ENCODE measurements at regions of chr1 and their contacts with region 1.

Region 1: DNA sequence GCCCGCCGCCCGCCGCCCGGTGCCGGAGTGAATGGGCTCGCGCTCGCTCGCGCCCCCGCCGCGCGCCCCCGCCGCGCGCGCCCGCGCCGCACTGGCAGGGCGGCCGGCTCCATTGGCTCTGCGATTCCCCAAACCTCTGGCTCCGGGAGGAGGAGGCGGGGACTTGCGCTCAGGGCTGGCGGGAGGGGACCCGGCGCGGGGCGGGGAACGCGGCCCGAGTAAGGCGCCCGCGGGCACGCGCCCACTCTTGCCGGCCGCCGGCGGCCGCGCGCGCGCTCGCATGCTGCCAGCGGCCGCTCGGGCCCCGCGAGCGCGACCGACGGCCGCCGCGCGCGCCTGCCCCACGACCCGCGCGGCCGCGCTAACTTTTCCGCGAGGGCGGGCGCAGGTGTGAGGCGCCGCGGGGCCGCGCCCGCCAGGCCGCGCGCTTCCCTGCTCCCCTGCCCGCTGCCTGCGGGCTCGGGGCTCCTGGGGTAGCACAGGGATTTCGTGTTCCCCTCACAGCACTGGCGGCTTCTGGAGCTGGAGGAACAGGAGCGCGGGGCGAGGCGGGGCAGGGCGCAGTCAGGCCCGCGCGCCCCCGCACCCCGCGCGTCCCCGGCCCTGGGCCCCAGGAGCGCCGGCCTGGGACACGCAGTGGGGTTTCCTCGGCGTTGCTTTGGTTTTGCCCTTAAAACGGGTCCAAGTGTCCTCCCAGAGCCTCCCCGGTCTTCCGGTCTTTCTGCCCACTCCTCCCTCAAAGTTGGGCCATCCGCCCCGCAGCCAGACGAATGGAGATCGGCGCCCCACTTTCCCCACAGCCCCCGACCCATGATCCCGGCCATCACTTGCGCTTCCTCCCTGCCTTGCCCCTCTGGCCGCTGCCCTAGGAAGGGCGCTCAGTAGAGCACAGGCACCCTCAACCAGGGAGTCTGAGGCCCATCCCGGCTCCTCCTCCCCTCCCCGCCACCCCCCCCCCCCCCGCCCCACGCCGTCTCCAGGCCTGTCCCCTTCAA is 101.5 kb downstream of the CASZ1 start:
- DNase-seq: peak; percentile 60 to 93 (median 73)
- ATAC-seq: peak; percentile 64
- H3K4me3 ChIP-seq: peak overlapping the region; percentile 32 to 48
- H3K4me3 Mint-ChIP-seq: peak overlapping the region; percentile 83
- H3K27ac ChIP-seq: no peak overlapping the region
- H3K27ac Mint-ChIP-seq: peak overlapping the region; percentile 88
- H3K4me1 ChIP-seq: peaks cover 17% of the 10 kb centered on the region
- H3K4me1 Mint-ChIP-seq: peaks cover 13% of the 10 kb centered on the region
- H3K27me3 ChIP-seq: no peaks in the 10 kb centered on the region
- H3K27me3 Mint-ChIP-seq: no peaks in the 10 kb centered on the region
- CTCF ChIP-seq: no peak

Region 2: GRCh38 chr1:9234223-9235095 is 1460.5 kb before region 1 on chr1 and contains the start of gene H6PD:
- CTCF ChIA-PET with region 1: no interaction called
- POLR2A ChIA-PET with region 1: no interaction called
- intact Hi-C with region 1: loop called in 1 of 2 experiments (anchors 10 kb)
- DNase-seq: peak; percentile 43 to 89 (median 71)
- ATAC-seq: peak; percentile 76
- H3K4me3 ChIP-seq: peak within 1 kb of the TSS; percentile 71 to 84
- H3K4me3 Mint-ChIP-seq: peak within 1 kb of the TSS; percentile 96
- H3K27ac ChIP-seq: peak within 1 kb of the TSS; percentile 64 to 84
- H3K27ac Mint-ChIP-seq: peak within 1 kb of the TSS; percentile 96
- H3K4me1 ChIP-seq: peaks cover 26% of the 10 kb centered on the region
- H3K4me1 Mint-ChIP-seq: peaks cover 38% of the 10 kb centered on the region
- H3K27me3 ChIP-seq: no peaks in the 10 kb centered on the region
- H3K27me3 Mint-ChIP-seq: no peaks in the 10 kb centered on the region
- CTCF ChIP-seq: peak; percentile 22
- total RNA-seq, gene H6PD: 11.1 to 11.2 TPM

Region 3: DNA sequence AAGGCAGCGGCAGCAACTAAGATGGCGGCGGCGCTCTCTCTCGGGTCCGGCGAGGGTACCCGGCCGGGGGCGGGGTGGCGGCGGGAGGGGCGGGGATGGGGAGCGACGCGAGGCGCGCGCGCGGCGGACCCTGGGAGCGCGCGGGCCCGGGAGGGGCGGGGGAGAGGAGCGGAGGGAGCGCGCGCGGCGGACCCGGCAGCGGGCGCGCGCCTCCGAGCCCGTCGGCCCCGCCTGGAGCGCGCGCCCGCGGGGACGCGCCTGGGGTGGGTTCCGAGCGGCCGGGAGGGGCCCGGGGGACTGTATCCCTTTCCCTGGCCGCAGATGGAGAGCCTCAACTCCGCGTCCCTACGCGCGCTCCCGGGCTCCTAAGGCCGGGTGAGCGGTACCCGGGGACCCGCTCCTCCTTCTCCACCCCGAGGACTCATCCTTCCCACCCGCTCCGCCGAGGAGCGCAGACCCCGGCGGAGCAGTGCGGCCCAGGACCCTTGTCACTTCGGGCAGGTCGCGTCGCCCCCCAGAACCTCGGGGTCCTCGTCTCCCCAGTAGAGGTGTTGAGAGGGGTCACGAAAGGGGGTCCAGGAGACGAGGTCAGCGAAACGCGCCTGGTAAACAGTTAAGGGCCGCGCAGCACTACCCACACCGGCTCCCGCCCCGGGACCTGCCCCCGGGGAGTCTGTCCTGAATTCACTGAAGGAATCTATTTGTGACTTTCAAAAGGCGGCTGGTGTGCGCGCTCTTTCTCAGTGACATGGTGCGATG is 870.8 kb before region 1 on chr1 and contains the start of gene CLSTN1:
- CTCF ChIA-PET with region 1: no interaction called
- POLR2A ChIA-PET with region 1: no interaction called
- intact Hi-C with region 1: loop called in 1 of 2 experiments (anchors 5 kb)
- DNase-seq: peak; percentile 76 to 93 (median 91)
- ATAC-seq: peak; percentile 72
- H3K4me3 ChIP-seq: peak within 1 kb of the TSS; percentile 58 to 72
- H3K4me3 Mint-ChIP-seq: peak within 1 kb of the TSS; percentile 96
- H3K27ac ChIP-seq: peak within 1 kb of the TSS; percentile 37 to 76
- H3K27ac Mint-ChIP-seq: peak within 1 kb of the TSS; percentile 89
- H3K4me1 ChIP-seq: peaks cover 36% of the 10 kb centered on the region
- H3K4me1 Mint-ChIP-seq: peaks cover 43% of the 10 kb centered on the region
- H3K27me3 ChIP-seq: no peaks in the 10 kb centered on the region
- H3K27me3 Mint-ChIP-seq: no peaks in the 10 kb centered on the region
- CTCF ChIP-seq: no peak
- total RNA-seq, gene CLSTN1: 50.0 to 51.1 TPM

Region 4: DNA sequence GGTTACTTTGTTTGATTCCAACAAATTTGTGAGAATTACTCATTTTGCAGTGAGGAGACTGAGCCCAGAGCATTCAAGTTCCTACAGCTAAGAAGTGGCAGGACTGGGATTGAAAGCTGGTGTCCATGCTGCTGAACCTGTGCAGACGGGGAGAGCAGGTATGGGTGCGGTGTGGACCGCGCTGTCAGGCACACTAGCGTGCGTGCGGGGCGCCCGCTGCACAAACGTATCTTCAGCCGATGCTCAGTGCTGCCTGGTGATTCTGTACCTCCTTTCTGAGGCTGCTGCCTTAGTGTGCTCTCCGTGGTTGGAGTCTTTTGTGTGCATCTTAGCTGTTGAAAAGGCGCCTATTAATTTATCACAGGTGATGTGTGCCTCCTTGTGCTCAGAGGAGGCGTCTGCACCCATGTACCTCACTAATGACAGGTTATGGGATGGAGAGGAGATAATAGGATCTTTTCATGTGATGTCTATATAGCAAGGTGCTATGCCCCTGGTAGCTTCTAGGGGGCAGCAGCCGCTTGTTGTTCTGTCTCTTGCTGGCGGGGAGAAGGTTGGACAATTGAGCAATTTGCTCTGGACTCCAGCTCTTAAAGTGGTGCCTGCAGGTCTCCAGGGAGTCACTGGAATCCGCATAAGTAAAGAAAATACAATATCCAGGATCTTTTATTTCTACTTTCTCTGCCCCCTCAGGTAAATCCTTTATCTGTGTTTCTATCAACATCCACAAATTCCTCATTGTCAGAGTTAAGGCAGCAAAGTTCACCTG is 187.6 kb before region 1 on chr1:
- CTCF ChIA-PET with region 1: interaction called, 5 read pairs
- POLR2A ChIA-PET with region 1: no interaction called
- intact Hi-C with region 1: loop called (anchors 5 kb)
- DNase-seq: peak; percentile 22 to 76 (median 57)
- ATAC-seq: peak; percentile 59
- H3K4me3 ChIP-seq: no peak overlapping the region
- H3K4me3 Mint-ChIP-seq: no peak overlapping the region
- H3K27ac ChIP-seq: no peak overlapping the region
- H3K27ac Mint-ChIP-seq: peak overlapping the region; percentile 39
- H3K4me1 ChIP-seq: peaks cover 35% of the 10 kb centered on the region
- H3K4me1 Mint-ChIP-seq: peaks cover 44% of the 10 kb centered on the region
- H3K27me3 ChIP-seq: no peaks in the 10 kb centered on the region
- H3K27me3 Mint-ChIP-seq: no peaks in the 10 kb centered on the region
- CTCF ChIP-seq: peak; percentile 81

Region 5: DNA sequence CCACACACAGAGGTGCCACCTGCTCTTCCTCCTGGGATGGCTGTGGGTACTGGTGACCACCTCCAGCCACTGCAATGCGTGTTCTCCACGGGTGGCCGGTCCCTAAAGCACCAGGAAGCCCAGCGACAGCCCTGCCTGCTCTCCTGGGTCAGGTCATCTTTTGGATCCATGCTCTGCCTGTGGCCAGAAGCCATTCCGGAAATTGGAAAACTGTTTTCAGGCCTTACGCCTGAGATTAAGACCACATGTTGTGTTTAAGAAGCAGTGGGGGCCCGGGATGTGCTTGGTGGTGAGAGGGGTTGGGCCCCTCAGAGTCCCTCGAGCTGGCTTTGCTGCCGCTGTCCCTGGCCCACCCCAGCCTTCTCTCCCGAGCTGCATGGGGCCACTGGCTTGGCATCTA is 69.4 kb before region 1 on chr1:
- CTCF ChIA-PET with region 1: no interaction called
- POLR2A ChIA-PET with region 1: no interaction called
- intact Hi-C with region 1: no loop called
- DNase-seq: no peak
- ATAC-seq: no peak
- H3K4me3 ChIP-seq: no peak overlapping the region
- H3K4me3 Mint-ChIP-seq: no peak overlapping the region
- H3K27ac ChIP-seq: no peak overlapping the region
- H3K27ac Mint-ChIP-seq: no peak overlapping the region
- H3K4me1 ChIP-seq: no peaks in the 10 kb centered on the region
- H3K4me1 Mint-ChIP-seq: no peaks in the 10 kb centered on the region
- H3K27me3 ChIP-seq: no peaks in the 10 kb centered on the region
- H3K27me3 Mint-ChIP-seq: no peaks in the 10 kb centered on the region
- CTCF ChIP-seq: no peak

Region 6: DNA sequence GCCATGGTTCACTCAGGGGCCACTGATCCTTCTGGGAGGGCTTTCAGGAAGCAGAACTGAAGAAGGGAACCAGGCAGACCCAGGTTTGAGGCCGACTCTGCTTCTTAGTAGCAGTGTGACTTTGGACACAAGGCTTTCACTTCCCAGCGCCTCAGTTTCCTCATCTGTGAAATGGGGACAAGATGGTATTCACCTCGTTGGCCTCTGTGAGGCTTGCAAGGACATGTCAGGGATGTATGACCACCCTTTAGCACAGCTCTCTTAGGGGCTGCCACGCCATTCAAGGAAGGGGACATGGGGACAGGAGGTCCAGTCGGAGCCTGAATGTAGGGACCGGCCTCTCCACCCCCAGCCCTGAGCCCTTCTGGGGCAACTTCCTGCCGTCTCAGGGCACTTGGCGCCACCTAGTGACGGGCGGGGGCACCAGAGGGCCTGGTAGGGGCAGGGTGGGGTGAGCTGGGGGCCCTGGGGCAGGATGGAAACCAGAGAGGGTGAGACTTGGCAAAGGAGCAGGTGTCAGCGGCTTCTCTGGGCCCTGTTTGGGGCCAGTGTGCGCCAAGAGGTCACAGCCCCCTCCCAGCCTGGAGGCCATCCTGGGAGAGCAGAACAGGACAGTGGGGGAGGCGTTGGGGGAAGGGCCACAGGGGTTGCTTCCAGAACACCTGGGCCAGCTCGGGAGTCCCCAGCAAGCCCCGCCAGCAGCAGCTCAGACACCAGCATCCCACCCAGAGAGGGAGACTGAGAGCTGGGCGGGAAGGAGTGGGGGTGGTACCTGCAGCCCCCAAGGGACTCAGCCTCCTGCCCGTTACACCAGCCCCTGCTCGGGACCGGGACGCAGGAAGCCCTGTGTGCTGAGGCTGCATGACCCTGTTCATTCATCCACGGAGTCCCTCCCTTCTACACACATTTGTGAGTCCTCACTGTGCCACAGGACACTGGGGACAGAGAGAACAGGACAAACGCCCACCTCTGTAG is 215.1 kb after region 1 on chr1:
- CTCF ChIA-PET with region 1: interaction called, 14 read pairs
- POLR2A ChIA-PET with region 1: no interaction called
- intact Hi-C with region 1: loop called (anchors 2 kb)
- DNase-seq: peak; percentile 64 to 87 (median 81)
- ATAC-seq: peak; percentile 95
- H3K4me3 ChIP-seq: no peak overlapping the region
- H3K4me3 Mint-ChIP-seq: no peak overlapping the region
- H3K27ac ChIP-seq: no peak overlapping the region
- H3K27ac Mint-ChIP-seq: no peak overlapping the region
- H3K4me1 ChIP-seq: peaks cover 29% of the 10 kb centered on the region
- H3K4me1 Mint-ChIP-seq: peaks cover 14% of the 10 kb centered on the region
- H3K27me3 ChIP-seq: no peaks in the 10 kb centered on the region
- H3K27me3 Mint-ChIP-seq: no peaks in the 10 kb centered on the region
- CTCF ChIP-seq: peak; percentile 66

Region 7: DNA sequence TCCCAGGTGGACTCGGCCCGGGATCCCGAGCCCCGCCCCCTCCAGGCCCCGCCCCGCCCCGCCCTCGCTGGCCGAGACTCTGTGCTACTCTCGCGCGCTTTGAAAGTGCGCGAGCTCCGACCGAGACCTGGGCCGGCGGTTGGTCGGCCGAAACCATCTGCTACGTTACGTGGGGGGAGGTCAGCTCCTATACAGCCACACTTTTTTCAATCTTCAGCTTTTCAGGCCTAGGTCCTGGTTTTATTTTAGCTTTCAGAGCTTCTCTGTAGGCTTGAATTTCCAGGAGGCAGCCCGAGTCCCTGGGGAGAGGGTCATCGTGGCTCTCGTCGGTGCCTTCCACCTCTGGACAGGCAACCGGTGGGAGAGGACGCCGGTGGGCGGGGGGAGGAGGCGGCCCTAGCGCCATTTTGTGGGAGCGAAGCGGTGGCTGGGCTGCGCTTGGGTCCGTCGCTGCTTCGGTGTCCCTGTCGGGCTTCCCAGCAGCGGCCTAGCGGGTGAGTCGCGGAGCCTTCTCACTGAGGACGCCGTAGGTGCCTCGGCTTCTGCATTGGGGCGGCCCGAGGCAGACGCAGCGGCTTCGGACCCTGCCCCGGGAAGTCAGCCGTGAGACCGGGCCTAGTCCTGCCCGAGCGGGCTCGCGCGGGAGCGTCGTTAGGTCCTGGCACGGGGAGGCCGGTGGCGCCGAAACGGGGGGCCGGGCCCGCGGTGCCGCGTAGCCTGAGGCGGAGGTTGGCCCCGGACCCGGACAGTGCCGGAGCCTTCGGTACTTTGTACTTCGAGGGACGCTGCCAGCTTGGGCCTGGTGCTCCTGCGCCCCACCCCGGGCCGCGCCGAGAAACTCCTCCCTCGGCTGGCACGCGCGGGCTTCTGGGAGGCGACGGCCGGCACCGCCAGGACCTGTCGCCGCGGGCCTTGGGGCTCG is 317.6 kb after region 1 on chr1 and contains the start of gene TARDBP:
- CTCF ChIA-PET with region 1: no interaction called
- POLR2A ChIA-PET with region 1: no interaction called
- intact Hi-C with region 1: loop called in 1 of 2 experiments (anchors 5 kb)
- DNase-seq: peak; percentile 82 to 95 (median 90)
- ATAC-seq: peak; percentile 87
- H3K4me3 ChIP-seq: peak within 1 kb of the TSS; percentile 78 to 94
- H3K4me3 Mint-ChIP-seq: peak within 1 kb of the TSS; percentile 92
- H3K27ac ChIP-seq: peak within 1 kb of the TSS; percentile 95 to 97
- H3K27ac Mint-ChIP-seq: peak within 1 kb of the TSS; percentile 97
- H3K4me1 ChIP-seq: peaks cover 38% of the 10 kb centered on the region
- H3K4me1 Mint-ChIP-seq: peaks cover 36% of the 10 kb centered on the region
- H3K27me3 ChIP-seq: no peaks in the 10 kb centered on the region
- H3K27me3 Mint-ChIP-seq: no peaks in the 10 kb centered on the region
- CTCF ChIP-seq: no peak
- total RNA-seq, gene TARDBP: 125 to 131 TPM

Region 8: GRCh38 chr1:11735854-11736745 is 1041.2 kb after region 1 on chr1 and contains the start of gene AGTRAP:
- CTCF ChIA-PET with region 1: no interaction called
- POLR2A ChIA-PET with region 1: no interaction called
- intact Hi-C with region 1: loop called in 1 of 2 experiments (anchors 5 kb)
- DNase-seq: peak; percentile 74 to 94 (median 86)
- ATAC-seq: peak; percentile 65
- H3K4me3 ChIP-seq: peak within 1 kb of the TSS; percentile 87 to 90
- H3K4me3 Mint-ChIP-seq: peak within 1 kb of the TSS; percentile 91
- H3K27ac ChIP-seq: peak within 1 kb of the TSS; percentile 50 to 74
- H3K27ac Mint-ChIP-seq: peak within 1 kb of the TSS; percentile 65
- H3K4me1 ChIP-seq: peaks cover 50% of the 10 kb centered on the region
- H3K4me1 Mint-ChIP-seq: peaks cover 69% of the 10 kb centered on the region
- H3K27me3 ChIP-seq: no peaks in the 10 kb centered on the region
- H3K27me3 Mint-ChIP-seq: no peaks in the 10 kb centered on the region
- CTCF ChIP-seq: no peak
- total RNA-seq, gene AGTRAP: 10.4 to 10.9 TPM